IMR-90 (cell line): ENCODE measurements at regions of chr10 and their contacts with region 1.

Region 1: GRCh38 chr10:93074147-93074596 is 479 bp downstream of the CYP26A1 start:
- DNase-seq: no peak
- ATAC-seq: peak; percentile 42
- H3K4me3 ChIP-seq: no peak overlapping the region
- H3K27ac ChIP-seq: no peak overlapping the region
- H3K4me1 ChIP-seq: peaks cover 6% of the 10 kb centered on the region; the same call in 1 of the 2 replicates
- H3K27me3 ChIP-seq: peaks cover 81% of the 10 kb centered on the region
- CTCF ChIP-seq: 0 out of 2 replicates have a peak, but pooled peaks have one; percentile 12
- POLR2A ChIP-seq: no peak
- RAD21 ChIP-seq: no peak

Region 2: GRCh38 chr10:93006435-93007039 is 67.6 kb before region 1 on chr10:
- CTCF ChIA-PET with region 1: no interaction called
- POLR2A ChIA-PET with region 1: no interaction called
- dilution Hi-C with region 1: no loop called
- in situ Hi-C with region 1: no loop called
- intact Hi-C with region 1: loop called (anchors 5 kb)
- DNase-seq: peak; percentile 75
- ATAC-seq: peak; percentile 85
- H3K4me3 ChIP-seq: no peak overlapping the region
- H3K27ac ChIP-seq: no peak overlapping the region
- H3K4me1 ChIP-seq: peaks cover 2% of the 10 kb centered on the region; the same call in 1 of the 2 replicates
- H3K27me3 ChIP-seq: no peaks in the 10 kb centered on the region
- CTCF ChIP-seq: peak; percentile 71
- POLR2A ChIP-seq: no peak
- RAD21 ChIP-seq: peak; percentile 76